ENCODE measurements at regions of chr2 and their contacts with region 1.

Region 1: GRCh38 chr2:55282110-55282917 is 13.3 kb upstream of the MTIF2 start:
- DNase-seq: peak; percentile 78 to 91 (median 81)
- ATAC-seq: peak; percentile 95
- H3K4me3 ChIP-seq: peak overlapping the region; percentile 66
- H3K27ac ChIP-seq: peak overlapping the region; percentile 91
- H3K4me1 ChIP-seq: peaks cover 7 to 9% of the 10 kb centered on the region in 2 experiments; a peak in 3 of 5 replicates
- H3K27me3 ChIP-seq: no peaks in the 10 kb centered on the region
- CTCF ChIP-seq: no peak
- EP300 ChIP-seq: no peak
- POLR2A ChIP-seq: peak; percentile 95
- RAD21 ChIP-seq: no peak; a peak in 1 of 4 replicates

Region 2: GRCh38 chr2:54966165-54966832 is 316.0 kb before region 1 on chr2:
- CTCF ChIA-PET with region 1: no interaction called
- POLR2A ChIA-PET with region 1: no interaction called
- in situ Hi-C with region 1: no loop called
- intact Hi-C with region 1: no loop called
- DNase-seq: no peak
- ATAC-seq: peak; percentile 17
- H3K4me3 ChIP-seq: no peak overlapping the region
- H3K27ac ChIP-seq: no peak overlapping the region
- H3K4me1 ChIP-seq: peaks cover 4 to 7% of the 10 kb centered on the region in 2 experiments; a peak in 3 of 5 replicates
- H3K27me3 ChIP-seq: no peaks in the 10 kb centered on the region
- CTCF ChIP-seq: no peak
- EP300 ChIP-seq: no peak
- POLR2A ChIP-seq: no peak
- RAD21 ChIP-seq: no peak

Region 3: DNA sequence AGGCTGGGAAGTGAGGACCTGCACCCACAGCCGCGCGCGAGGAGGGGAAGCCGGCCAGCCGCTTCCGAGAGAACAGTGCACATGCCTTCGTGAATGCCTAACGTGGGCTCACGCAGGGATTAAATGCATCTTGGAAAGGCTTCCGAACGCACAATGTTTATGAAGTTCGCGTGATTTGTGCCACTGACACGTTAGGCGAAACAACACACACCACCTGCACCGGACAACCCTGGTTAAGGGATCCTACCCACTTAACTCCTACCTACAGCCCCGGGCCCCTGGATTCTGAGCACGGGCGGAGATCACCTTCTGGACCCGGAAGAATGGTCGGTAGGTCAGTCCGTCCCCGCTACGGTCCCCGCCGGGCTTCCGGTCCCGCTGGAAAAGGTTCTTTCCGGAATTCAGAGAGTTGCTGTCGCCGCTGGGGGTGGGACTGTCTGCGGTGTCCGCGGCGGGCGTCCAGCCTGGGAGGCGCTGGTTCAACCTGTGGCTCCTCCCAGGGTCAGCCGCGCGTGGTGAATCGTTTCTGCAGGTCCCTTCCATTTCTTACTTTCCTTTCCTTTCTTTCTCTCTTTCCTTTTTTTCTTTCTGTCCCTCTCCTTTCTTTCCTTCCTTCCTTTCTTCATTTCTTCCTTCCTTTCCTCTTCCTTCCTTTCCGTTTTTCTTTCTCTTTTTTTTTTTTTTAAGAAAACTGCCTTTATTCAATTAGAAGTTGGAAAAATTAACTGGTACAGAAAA is 13.2 kb before region 1 on chr2 and contains the start of gene MTIF2:
- CTCF ChIA-PET with region 1: no interaction called
- POLR2A ChIA-PET with region 1: interaction called, 7 read pairs
- in situ Hi-C with region 1: no loop called
- intact Hi-C with region 1: loop called (anchors 1 kb)
- DNase-seq: peak; percentile 88 to 98 (median 91)
- ATAC-seq: peak; percentile 100
- H3K4me3 ChIP-seq: peak within 1 kb of the TSS; percentile 71
- H3K27ac ChIP-seq: peak within 1 kb of the TSS; percentile 91
- H3K4me1 ChIP-seq: peaks cover 7 to 8% of the 10 kb centered on the region in 2 experiments; a peak in 3 of 5 replicates
- H3K27me3 ChIP-seq: no peaks in the 10 kb centered on the region
- CTCF ChIP-seq: peak; percentile 24 to 50 (median 36); a peak in 4 of 6 replicates
- EP300 ChIP-seq: peak; percentile 50; the same call in 1 of the 2 replicates
- POLR2A ChIP-seq: peak; percentile 97
- RAD21 ChIP-seq: peak in 1 of 2 experiments; percentile 37; a peak in 2 of 4 replicates
- polyA plus RNA-seq, gene MTIF2: 58.7 to 106 TPM